ENCODE measurements at regions of chr3 and their contacts with region 1.

Region 1: GRCh38 chr3:103494011-103494410 is 1059.2 kb downstream of the ZPLD1 start:
- DNase-seq: no peak
- H3K4me3 ChIP-seq: no peak overlapping the region
- H3K27ac ChIP-seq: peak overlapping the region; percentile 98
- H3K4me1 ChIP-seq: peaks cover 75% of the 10 kb centered on the region
- H3K27me3 ChIP-seq: no peaks in the 10 kb centered on the region
- CTCF ChIP-seq: no peak

Region 2: GRCh38 chr3:102673271-102674115 is 820.5 kb before region 1 on chr3:
- CTCF ChIA-PET with region 1: interaction called, 18 read pairs
- POLR2A ChIA-PET with region 1: interaction called, 9 read pairs
- intact Hi-C with region 1: loop called (anchors 2 kb)
- DNase-seq: peak; percentile 89
- H3K4me3 ChIP-seq: peak overlapping the region; percentile 19
- H3K27ac ChIP-seq: peak overlapping the region; percentile 51
- H3K4me1 ChIP-seq: peaks cover 43% of the 10 kb centered on the region
- H3K27me3 ChIP-seq: no peaks in the 10 kb centered on the region
- CTCF ChIP-seq: peak; percentile 91

Region 3: DNA sequence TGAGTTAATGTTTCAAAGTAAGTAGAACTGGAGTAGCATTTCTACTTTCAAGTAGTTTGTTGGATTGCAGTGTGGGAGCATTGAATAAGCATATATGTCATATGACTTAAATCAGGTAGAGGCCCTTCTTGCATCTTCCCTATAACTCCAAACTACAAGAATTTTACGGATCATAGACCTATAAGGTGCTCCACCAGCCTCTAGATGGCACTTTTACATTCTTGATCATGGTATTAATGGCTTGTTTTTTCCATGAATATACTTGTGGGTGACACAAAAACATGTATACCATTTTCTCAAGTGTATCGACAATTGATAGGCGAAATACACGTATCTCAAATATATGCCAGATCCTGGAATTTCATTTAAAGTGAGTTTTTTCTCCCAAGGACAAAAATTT is 748.1 kb before region 1 on chr3:
- CTCF ChIA-PET with region 1: no interaction called
- POLR2A ChIA-PET with region 1: no interaction called
- intact Hi-C with region 1: loop called (anchors 5 kb)
- DNase-seq: peak; percentile 68
- H3K4me3 ChIP-seq: no peak overlapping the region
- H3K27ac ChIP-seq: no peak overlapping the region
- H3K4me1 ChIP-seq: peaks cover 8% of the 10 kb centered on the region
- H3K27me3 ChIP-seq: no peaks in the 10 kb centered on the region
- CTCF ChIP-seq: peak; percentile 63

Region 4: DNA sequence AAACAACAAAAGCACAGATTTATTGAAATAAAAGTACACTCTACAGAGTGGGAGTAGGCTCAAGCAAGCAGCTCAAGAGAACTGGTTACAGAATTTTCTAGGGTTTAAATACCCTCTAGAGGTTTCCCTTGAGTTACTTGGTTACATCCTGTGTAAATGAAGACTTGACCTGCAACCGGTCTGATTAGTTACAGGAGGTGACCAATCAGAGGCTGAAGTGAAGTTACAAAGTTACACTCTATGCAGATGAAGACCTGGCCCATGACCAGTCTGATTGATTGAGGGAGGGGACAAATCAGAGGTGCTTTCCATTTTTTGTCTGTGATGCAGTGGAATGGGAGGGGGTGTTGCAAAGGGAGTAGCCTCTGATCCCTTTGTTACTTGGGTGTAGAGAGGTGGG is 335.8 kb before region 1 on chr3:
- CTCF ChIA-PET with region 1: no interaction called
- POLR2A ChIA-PET with region 1: interaction called, 6 read pairs
- intact Hi-C with region 1: loop called (anchors 1 kb)
- DNase-seq: no peak
- H3K4me3 ChIP-seq: no peak overlapping the region
- H3K27ac ChIP-seq: peak overlapping the region; percentile 51
- H3K4me1 ChIP-seq: peaks cover 18% of the 10 kb centered on the region
- H3K27me3 ChIP-seq: no peaks in the 10 kb centered on the region
- CTCF ChIP-seq: no peak

Region 5: GRCh38 chr3:103511891-103512290 is 17.9 kb after region 1 on chr3:
- CTCF ChIA-PET with region 1: no interaction called
- POLR2A ChIA-PET with region 1: interaction called, 12 read pairs
- intact Hi-C with region 1: no loop called
- DNase-seq: no peak
- H3K4me3 ChIP-seq: no peak overlapping the region
- H3K27ac ChIP-seq: no peak overlapping the region
- H3K4me1 ChIP-seq: no peaks in the 10 kb centered on the region
- H3K27me3 ChIP-seq: no peaks in the 10 kb centered on the region
- CTCF ChIP-seq: no peak

Measured in A673 (cell line).